Activated CD8-positive, alpha-beta T cell treated with anti-CD3 and anti-CD28 coated beads, Interleukin-2, amount 10 ng/mL, durations not matched to agents 7 days and 5 days (primary cell): ENCODE measurements at regions of chr6 and their contacts with region 1.

Region 1: GRCh38 chr6:134938896-134939295 is 11.0 kb downstream of the ALDH8A1 start:
- DNase-seq: peak; percentile 40
- ATAC-seq: peak; percentile 84
- H3K4me3 Mint-ChIP-seq: no peak overlapping the region
- H3K27ac Mint-ChIP-seq: no peak overlapping the region
- H3K4me1 Mint-ChIP-seq: peaks cover 7% of the 10 kb centered on the region
- H3K27me3 Mint-ChIP-seq: no peaks in the 10 kb centered on the region

Region 2: GRCh38 chr6:134145786-134146185 is 793.1 kb before region 1 on chr6:
- CTCF ChIA-PET with region 1: interaction called, 14 read pairs
- POLR2A ChIA-PET with region 1: no interaction called
- DNase-seq: no peak
- ATAC-seq: no peak
- H3K4me3 Mint-ChIP-seq: no peak overlapping the region
- H3K27ac Mint-ChIP-seq: no peak overlapping the region
- H3K4me1 Mint-ChIP-seq: no peaks in the 10 kb centered on the region
- H3K27me3 Mint-ChIP-seq: peaks cover 2% of the 10 kb centered on the region

Region 3: GRCh38 chr6:134161036-134161435 is 777.9 kb before region 1 on chr6:
- CTCF ChIA-PET with region 1: interaction called, 45 read pairs
- POLR2A ChIA-PET with region 1: no interaction called
- DNase-seq: no peak
- ATAC-seq: no peak
- H3K4me3 Mint-ChIP-seq: no peak overlapping the region
- H3K27ac Mint-ChIP-seq: no peak overlapping the region
- H3K4me1 Mint-ChIP-seq: no peaks in the 10 kb centered on the region
- H3K27me3 Mint-ChIP-seq: no peaks in the 10 kb centered on the region

Region 4: GRCh38 chr6:134640975-134641429 is 297.9 kb before region 1 on chr6:
- CTCF ChIA-PET with region 1: interaction called, 19 read pairs
- POLR2A ChIA-PET with region 1: no interaction called
- DNase-seq: peak; percentile 80
- ATAC-seq: peak; percentile 87
- H3K4me3 Mint-ChIP-seq: no peak overlapping the region
- H3K27ac Mint-ChIP-seq: no peak overlapping the region
- H3K4me1 Mint-ChIP-seq: peaks cover 12% of the 10 kb centered on the region
- H3K27me3 Mint-ChIP-seq: no peaks in the 10 kb centered on the region

Region 5: GRCh38 chr6:134882426-134883038 is 56.4 kb before region 1 on chr6:
- CTCF ChIA-PET with region 1: interaction called, 10 read pairs
- POLR2A ChIA-PET with region 1: no interaction called
- DNase-seq: peak; percentile 49
- ATAC-seq: no peak
- H3K4me3 Mint-ChIP-seq: no peak overlapping the region
- H3K27ac Mint-ChIP-seq: no peak overlapping the region
- H3K4me1 Mint-ChIP-seq: no peaks in the 10 kb centered on the region
- H3K27me3 Mint-ChIP-seq: peaks cover 21% of the 10 kb centered on the region

Region 6: GRCh38 chr6:134950482-134950881 is 11.6 kb after region 1 on chr6:
- CTCF ChIA-PET with region 1: interaction called, 16 read pairs
- POLR2A ChIA-PET with region 1: no interaction called
- DNase-seq: no peak
- ATAC-seq: no peak
- H3K4me3 Mint-ChIP-seq: no peak overlapping the region
- H3K27ac Mint-ChIP-seq: no peak overlapping the region
- H3K4me1 Mint-ChIP-seq: no peaks in the 10 kb centered on the region
- H3K27me3 Mint-ChIP-seq: no peaks in the 10 kb centered on the region

Region 7: DNA sequence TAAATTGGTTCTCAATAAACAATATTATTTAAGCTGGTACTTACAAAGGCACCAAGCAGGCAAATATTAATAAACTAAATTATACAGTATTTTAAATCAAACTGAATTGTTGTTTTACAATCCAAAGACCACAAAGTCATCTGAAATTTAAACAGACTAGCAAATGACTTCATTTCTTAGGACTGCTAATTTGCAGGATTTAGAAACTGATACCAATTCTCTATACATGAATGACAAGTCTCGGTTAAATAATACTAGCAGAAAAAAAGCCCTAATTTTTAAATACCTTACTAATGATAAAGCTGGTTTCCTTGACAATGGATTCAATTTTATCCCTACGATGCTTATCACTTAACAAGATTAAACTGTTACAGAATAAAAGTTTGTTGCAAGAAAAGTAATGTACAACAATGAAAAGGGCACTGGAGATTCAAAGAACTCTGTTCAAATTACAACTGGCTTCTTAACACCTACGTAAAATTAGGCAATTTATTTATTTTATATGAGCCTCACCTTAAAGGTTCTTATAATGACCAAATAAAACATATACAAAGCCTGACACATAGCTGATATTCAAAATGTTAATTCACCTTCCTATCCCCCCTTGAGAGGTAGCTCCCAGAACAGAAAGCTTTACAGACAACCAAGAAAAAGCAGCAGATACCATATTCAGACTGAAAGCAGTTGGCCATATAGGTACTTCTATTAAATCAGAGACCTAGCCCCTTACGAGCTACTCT is 82.6 kb after region 1 on chr6:
- CTCF ChIA-PET with region 1: no interaction called
- POLR2A ChIA-PET with region 1: no interaction called
- DNase-seq: no peak
- ATAC-seq: peak; percentile 62
- H3K4me3 Mint-ChIP-seq: peak overlapping the region; percentile 0
- H3K27ac Mint-ChIP-seq: peak overlapping the region; percentile 10
- H3K4me1 Mint-ChIP-seq: peaks cover 50% of the 10 kb centered on the region
- H3K27me3 Mint-ChIP-seq: no peaks in the 10 kb centered on the region